ENCODE measurements at regions of chr12 and their contacts with region 1.

Region 1: DNA sequence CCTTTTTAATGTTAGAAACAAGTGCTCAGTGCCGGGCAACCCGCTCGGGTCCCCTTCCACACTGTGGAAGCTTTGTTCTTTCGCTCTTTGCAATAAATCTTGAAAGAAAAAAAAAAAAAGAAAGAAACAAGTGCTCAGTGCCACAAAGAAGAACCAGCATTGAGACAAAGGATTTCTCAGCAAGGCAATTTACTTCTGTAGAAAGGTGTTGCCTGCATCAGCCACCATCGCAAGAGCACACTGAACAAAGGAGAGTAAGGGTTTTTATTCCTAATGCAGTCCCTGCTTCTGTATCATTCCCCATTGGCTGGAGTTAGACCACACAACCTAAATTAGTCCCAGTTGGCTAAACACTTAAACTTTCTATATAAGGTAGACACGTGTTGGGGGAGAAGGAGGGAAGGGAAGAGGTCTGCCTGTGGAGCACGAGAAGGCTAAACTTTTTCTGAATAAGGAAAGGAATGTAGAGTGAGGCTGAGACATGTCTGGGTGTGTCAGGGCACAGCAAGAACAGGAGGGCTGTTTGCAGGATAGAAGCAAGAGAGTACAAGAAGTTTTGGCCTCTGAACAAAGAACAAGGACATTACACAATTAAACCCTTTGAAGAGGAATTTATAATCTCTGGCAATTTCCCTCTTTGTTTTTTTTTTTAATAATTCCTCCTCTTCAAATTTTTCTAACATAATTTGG is 21.4 kb downstream of the KLRF2 start:
- DNase-seq: no peak
- H3K4me3 ChIP-seq: no peak overlapping the region
- H3K27ac ChIP-seq: no peak overlapping the region
- H3K4me1 ChIP-seq: no peaks in the 10 kb centered on the region
- H3K27me3 ChIP-seq: no peaks in the 10 kb centered on the region
- CTCF ChIP-seq: no peak
- POLR2A ChIP-seq: no peak

Region 2: GRCh38 chr12:9214536-9214935 is 688.1 kb before region 1 on chr12:
- intact Hi-C with region 1: no loop called
- DNase-seq: no peak
- H3K4me3 ChIP-seq: no peak overlapping the region
- H3K27ac ChIP-seq: no peak overlapping the region
- H3K4me1 ChIP-seq: no peaks in the 10 kb centered on the region
- H3K27me3 ChIP-seq: no peaks in the 10 kb centered on the region
- CTCF ChIP-seq: no peak
- POLR2A ChIP-seq: no peak

Region 3: GRCh38 chr12:10082117-10082874 is 179.6 kb after region 1 on chr12:
- intact Hi-C with region 1: loop called (anchors 5 kb)
- DNase-seq: no peak
- H3K4me3 ChIP-seq: no peak overlapping the region
- H3K27ac ChIP-seq: no peak overlapping the region
- H3K4me1 ChIP-seq: no peaks in the 10 kb centered on the region
- H3K27me3 ChIP-seq: no peaks in the 10 kb centered on the region
- CTCF ChIP-seq: no peak
- POLR2A ChIP-seq: no peak

Measured in vagina (tissue), 2 donors.